ENCODE measurements at regions of chr3 and their contacts with region 1.

Region 1: GRCh38 chr3:38136777-38137614 is at the start of gene ACAA1:
- DNase-seq: peak; percentile 90
- ATAC-seq: peak; percentile 92
- H3K4me3 Mint-ChIP-seq: peak within 1 kb of the TSS; percentile 97
- H3K27ac Mint-ChIP-seq: peak within 1 kb of the TSS; percentile 99
- H3K4me1 Mint-ChIP-seq: peaks cover 66% of the 10 kb centered on the region
- H3K27me3 Mint-ChIP-seq: no peaks in the 10 kb centered on the region
- CTCF ChIP-seq: no peak
- total RNA-seq, gene ACAA1: 78.1 and 79.6 TPM in 2 replicates

Region 2: DNA sequence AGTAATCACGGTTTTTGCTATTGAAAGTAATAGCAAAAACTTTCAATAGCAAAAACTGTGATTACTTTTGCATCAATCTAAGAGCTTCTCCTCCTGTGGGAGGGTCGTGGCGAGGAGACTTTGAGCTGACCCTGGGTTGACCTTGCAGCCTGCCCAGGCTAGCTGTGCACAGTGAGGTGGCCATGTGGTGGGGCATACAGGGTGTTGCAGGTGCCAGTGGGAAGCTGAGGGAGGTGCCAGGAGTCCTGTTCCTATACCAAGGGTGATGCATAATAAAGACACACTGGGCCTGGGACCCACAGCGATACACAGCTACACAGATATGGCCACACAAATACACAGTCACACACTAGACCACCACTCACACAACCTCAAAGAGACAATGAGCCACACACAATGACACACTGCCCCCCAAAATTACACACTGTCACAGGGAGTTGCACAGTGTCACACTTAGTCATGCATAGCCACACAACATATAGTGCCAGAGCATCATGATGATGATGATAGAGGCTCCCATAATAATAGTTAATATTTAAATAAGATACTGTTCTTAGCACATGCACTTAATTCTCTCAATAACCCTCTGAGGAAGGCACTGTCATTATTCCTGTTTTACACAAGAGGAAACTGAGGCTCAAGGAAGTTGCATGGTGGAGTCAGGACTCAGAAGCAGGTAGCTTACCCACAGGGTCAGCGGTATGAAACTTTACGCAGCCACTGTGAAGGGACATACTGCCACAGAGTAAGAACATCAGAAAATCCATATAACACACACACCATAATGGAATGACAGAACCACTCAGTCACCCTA is 113.9 kb before region 1 on chr3:
- CTCF ChIA-PET with region 1: no interaction called
- POLR2A ChIA-PET with region 1: no interaction called
- intact Hi-C with region 1: no loop called
- DNase-seq: no peak
- ATAC-seq: no peak
- H3K4me3 Mint-ChIP-seq: peak overlapping the region; percentile 97
- H3K27ac Mint-ChIP-seq: peak overlapping the region; percentile 98
- H3K4me1 Mint-ChIP-seq: peaks cover 25% of the 10 kb centered on the region
- H3K27me3 Mint-ChIP-seq: no peaks in the 10 kb centered on the region
- CTCF ChIP-seq: no peak

Region 3: GRCh38 chr3:38039101-38039898 is 97.7 kb before region 1 on chr3 and contains the start of gene DLEC1:
- CTCF ChIA-PET with region 1: no interaction called
- POLR2A ChIA-PET with region 1: interaction called, 20 read pairs
- intact Hi-C with region 1: loop called (anchors 1 kb)
- DNase-seq: peak; percentile 57
- ATAC-seq: peak; percentile 74
- H3K4me3 Mint-ChIP-seq: peak within 1 kb of the TSS; percentile 86
- H3K27ac Mint-ChIP-seq: peak within 1 kb of the TSS; percentile 54
- H3K4me1 Mint-ChIP-seq: peaks cover 21% of the 10 kb centered on the region
- H3K27me3 Mint-ChIP-seq: peaks cover 5% of the 10 kb centered on the region
- CTCF ChIP-seq: no peak
- total RNA-seq, gene DLEC1: 0.10 and 0.11 TPM in 2 replicates

Region 4: GRCh38 chr3:38164966-38165680 is 28.1 kb after region 1 on chr3 and contains the start of gene OXSR1:
- CTCF ChIA-PET with region 1: interaction called, 7 read pairs
- POLR2A ChIA-PET with region 1: interaction called, 217 read pairs
- intact Hi-C with region 1: loop called (anchors 1 kb)
- DNase-seq: peak; percentile 95
- ATAC-seq: peak; percentile 88
- H3K4me3 Mint-ChIP-seq: peak within 1 kb of the TSS; percentile 94
- H3K27ac Mint-ChIP-seq: peak within 1 kb of the TSS; percentile 100
- H3K4me1 Mint-ChIP-seq: peaks cover 45% of the 10 kb centered on the region
- H3K27me3 Mint-ChIP-seq: no peaks in the 10 kb centered on the region
- CTCF ChIP-seq: no peak
- total RNA-seq, gene OXSR1: 34.8 and 40.2 TPM in 2 replicates

Region 5: GRCh38 chr3:38297947-38298711 is 161.1 kb after region 1 on chr3:
- CTCF ChIA-PET with region 1: no interaction called
- POLR2A ChIA-PET with region 1: no interaction called
- intact Hi-C with region 1: loop called (anchors 5 kb)
- DNase-seq: no peak
- ATAC-seq: no peak
- H3K4me3 Mint-ChIP-seq: no peak overlapping the region
- H3K27ac Mint-ChIP-seq: no peak overlapping the region
- H3K4me1 Mint-ChIP-seq: no peaks in the 10 kb centered on the region
- H3K27me3 Mint-ChIP-seq: peaks cover 14% of the 10 kb centered on the region
- CTCF ChIP-seq: no peak

Region 6: DNA sequence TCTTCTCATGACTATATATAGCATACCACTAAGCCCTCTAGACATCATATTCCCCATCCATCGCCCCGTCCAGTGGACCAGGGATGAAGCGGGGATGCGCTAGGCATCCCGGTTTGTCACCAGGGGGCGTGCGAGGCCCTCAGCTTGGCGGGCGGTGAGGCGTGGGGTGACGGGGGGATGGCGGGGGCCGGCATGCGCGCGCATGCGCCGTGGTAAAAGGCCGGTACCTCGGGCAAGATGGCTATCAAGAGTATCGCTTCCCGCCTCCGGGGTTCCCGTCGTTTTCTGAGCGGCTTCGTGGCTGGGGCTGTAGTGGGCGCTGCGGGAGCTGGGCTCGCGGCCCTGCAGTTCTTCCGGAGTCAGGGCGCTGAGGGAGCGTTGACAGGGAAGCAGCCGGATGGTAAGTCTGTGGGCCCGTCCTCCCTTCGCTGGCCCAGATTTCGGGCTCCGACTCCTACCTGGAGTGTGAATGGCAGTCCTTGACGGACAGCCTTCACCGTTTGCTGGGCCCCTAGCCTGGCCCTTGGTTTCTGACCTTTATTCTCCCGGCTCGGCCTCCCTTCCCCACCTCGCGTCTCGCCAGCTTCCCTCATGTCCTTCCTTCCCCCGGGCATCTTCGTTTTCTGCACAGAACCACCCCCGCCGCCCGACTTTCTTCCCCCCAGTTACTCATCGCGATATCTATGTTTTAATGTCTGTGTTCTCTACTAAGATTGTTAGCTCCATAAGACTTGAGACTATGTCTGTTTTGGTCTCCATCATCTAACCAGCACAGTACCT is 359.3 kb after region 1 on chr3 and contains the start of gene EXOG:
- CTCF ChIA-PET with region 1: no interaction called
- POLR2A ChIA-PET with region 1: interaction called, 7 read pairs
- intact Hi-C with region 1: loop called (anchors 1 kb)
- DNase-seq: peak; percentile 88
- ATAC-seq: peak; percentile 96
- H3K4me3 Mint-ChIP-seq: peak within 1 kb of the TSS; percentile 98
- H3K27ac Mint-ChIP-seq: peak within 1 kb of the TSS; percentile 88
- H3K4me1 Mint-ChIP-seq: peaks cover 8% of the 10 kb centered on the region
- H3K27me3 Mint-ChIP-seq: no peaks in the 10 kb centered on the region
- CTCF ChIP-seq: peak; percentile 97
- total RNA-seq, gene EXOG: 26.8 and 32.3 TPM in 2 replicates

Region 7: GRCh38 chr3:39146984-39147591 is 1010.1 kb after region 1 on chr3:
- CTCF ChIA-PET with region 1: no interaction called
- POLR2A ChIA-PET with region 1: no interaction called
- intact Hi-C with region 1: loop called (anchors 2 kb)
- DNase-seq: no peak
- ATAC-seq: peak; percentile 53
- H3K4me3 Mint-ChIP-seq: peak overlapping the region; percentile 98
- H3K27ac Mint-ChIP-seq: peak overlapping the region; percentile 99
- H3K4me1 Mint-ChIP-seq: peaks cover 81% of the 10 kb centered on the region
- H3K27me3 Mint-ChIP-seq: no peaks in the 10 kb centered on the region
- CTCF ChIP-seq: no peak